ENCODE measurements at regions of chr4 and their contacts with region 1.

Region 1: DNA sequence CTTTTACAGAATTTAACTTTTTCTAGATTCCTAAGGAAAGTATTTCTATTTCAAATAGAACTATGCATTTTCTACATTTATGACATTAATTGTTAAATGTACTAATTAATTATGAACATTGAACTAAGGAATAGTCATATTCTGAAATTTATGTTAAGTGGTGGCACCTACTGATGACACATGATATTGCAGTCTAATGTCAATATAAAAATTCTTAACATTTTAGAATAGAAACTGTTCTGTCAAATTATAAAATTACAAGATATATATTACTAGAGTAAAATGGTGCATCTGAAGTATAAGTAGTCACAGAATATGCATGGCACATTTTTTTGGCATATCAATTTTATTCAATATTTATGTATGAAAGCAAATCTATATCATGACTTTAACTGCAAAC is 40.2 kb upstream of the NDNF start:
- DNase-seq: no peak
- H3K4me3 Mint-ChIP-seq: no peak overlapping the region
- H3K27ac Mint-ChIP-seq: no peak overlapping the region
- H3K4me1 Mint-ChIP-seq: peaks cover 11% of the 10 kb centered on the region
- H3K27me3 Mint-ChIP-seq: peaks cover 31% of the 10 kb centered on the region

Region 2: DNA sequence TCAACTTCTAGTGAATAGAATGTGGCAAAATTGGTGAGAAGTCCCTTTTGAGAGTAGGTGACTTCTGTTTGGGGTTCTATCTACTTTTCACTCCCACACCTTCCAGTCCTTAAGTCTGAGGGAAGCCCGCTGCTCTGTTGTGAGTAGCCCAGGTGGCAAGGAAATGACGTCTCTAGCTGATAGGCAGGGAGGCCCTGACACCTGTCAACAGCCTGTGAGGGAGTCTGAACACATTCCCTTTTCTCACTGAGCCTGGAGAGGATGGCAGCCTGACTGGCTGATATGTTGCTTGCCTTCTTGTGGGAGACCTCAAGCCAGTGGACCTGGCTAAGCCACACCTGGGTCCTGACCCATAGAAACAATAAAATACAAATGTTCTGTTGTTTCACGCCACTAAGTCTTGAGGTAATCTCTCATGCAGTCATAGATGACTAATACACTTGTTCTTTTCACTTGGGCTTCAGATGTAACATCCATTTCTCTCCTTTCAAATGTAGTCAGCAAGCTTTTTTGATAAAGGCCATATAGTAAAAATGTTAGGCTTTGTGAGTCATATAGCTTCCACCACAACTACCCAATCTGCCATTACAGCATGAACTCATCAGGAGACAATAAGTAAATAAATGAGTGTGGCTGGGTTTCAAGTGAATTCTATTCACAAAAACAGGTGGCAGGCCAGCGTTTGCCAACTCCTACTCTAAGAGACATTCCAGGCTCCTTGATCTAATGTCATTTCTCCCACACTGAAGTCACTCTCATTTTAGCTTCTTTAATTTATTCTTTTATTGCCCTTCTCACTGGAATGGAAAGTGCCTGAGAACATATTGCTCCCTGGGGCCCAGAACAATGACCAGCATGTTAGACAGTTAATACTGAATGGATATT is 780.8 kb before region 1 on chr4:
- intact Hi-C with region 1: loop called (anchors 5 kb)
- DNase-seq: no peak
- H3K4me3 Mint-ChIP-seq: no peak overlapping the region
- H3K27ac Mint-ChIP-seq: no peak overlapping the region
- H3K4me1 Mint-ChIP-seq: no peaks in the 10 kb centered on the region
- H3K27me3 Mint-ChIP-seq: peaks cover 2% of the 10 kb centered on the region

Region 3: GRCh38 chr4:121041307-121042090 is 71.0 kb before region 1 on chr4:
- intact Hi-C with region 1: loop called (anchors 1 kb)
- DNase-seq: peak; percentile 72
- H3K4me3 Mint-ChIP-seq: no peak overlapping the region
- H3K27ac Mint-ChIP-seq: peak overlapping the region; percentile 0
- H3K4me1 Mint-ChIP-seq: peaks cover 11% of the 10 kb centered on the region
- H3K27me3 Mint-ChIP-seq: peaks cover 49% of the 10 kb centered on the region

Region 4: DNA sequence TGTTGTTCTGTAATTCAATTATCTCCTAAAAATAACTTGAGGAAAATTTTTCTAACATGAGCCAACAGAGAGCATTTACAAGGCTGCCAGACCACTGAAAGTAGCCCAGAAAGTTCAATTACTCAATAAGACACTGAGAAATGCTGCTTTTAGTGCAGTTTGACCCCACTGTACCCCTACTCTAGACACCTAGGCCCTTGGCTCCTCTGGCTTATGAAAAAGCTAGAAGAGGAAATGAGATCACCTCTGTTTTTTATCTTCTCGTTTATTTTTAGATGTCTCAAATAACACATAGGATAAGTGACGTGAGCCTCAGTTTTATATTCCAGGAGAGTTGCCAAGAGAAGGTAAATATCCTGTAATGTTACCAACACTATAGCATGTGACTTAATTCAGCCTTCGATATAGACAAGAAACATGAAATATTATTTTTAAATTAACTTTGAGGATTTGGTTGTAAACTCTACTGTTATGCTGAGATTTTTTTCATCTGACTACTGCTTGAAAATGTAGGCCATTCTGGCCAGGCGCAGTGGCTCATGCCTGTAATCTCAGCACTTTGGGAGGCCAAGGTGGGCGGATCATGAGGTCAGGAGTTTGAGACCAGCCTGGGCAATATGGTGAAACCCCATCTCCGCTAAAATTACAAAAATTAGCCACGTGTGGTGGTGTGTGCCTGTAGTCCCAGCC is 27.1 kb after region 1 on chr4:
- intact Hi-C with region 1: loop called (anchors 1 kb)
- DNase-seq: no peak
- H3K4me3 Mint-ChIP-seq: peak overlapping the region; percentile 26
- H3K27ac Mint-ChIP-seq: peak overlapping the region; percentile 78
- H3K4me1 Mint-ChIP-seq: peaks cover 45% of the 10 kb centered on the region
- H3K27me3 Mint-ChIP-seq: peaks cover 1% of the 10 kb centered on the region

Region 5: DNA sequence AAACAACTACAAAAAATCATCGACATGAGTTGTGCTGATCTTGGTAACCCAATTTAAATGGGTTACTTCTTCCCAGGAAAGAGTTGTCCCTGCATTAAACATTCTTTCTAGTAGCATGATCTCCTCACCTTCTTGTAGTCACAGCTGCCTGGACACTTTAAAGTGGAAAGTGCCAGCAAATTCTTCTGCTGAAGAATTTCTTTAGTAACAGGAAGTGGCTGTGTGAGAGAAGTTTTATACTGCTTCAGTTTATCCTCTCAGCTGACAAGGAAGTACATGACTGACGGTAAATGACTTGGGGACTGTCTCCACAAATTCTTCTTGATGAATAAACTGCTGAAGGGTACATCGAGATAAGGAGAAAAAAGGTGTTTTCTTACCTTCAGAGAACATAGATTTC is 69.8 kb after region 1 on chr4:
- intact Hi-C with region 1: loop called (anchors 5 kb)
- DNase-seq: peak; percentile 84
- H3K4me3 Mint-ChIP-seq: peak overlapping the region; percentile 79
- H3K27ac Mint-ChIP-seq: peak overlapping the region; percentile 90
- H3K4me1 Mint-ChIP-seq: peaks cover 55% of the 10 kb centered on the region
- H3K27me3 Mint-ChIP-seq: no peaks in the 10 kb centered on the region

Region 6: DNA sequence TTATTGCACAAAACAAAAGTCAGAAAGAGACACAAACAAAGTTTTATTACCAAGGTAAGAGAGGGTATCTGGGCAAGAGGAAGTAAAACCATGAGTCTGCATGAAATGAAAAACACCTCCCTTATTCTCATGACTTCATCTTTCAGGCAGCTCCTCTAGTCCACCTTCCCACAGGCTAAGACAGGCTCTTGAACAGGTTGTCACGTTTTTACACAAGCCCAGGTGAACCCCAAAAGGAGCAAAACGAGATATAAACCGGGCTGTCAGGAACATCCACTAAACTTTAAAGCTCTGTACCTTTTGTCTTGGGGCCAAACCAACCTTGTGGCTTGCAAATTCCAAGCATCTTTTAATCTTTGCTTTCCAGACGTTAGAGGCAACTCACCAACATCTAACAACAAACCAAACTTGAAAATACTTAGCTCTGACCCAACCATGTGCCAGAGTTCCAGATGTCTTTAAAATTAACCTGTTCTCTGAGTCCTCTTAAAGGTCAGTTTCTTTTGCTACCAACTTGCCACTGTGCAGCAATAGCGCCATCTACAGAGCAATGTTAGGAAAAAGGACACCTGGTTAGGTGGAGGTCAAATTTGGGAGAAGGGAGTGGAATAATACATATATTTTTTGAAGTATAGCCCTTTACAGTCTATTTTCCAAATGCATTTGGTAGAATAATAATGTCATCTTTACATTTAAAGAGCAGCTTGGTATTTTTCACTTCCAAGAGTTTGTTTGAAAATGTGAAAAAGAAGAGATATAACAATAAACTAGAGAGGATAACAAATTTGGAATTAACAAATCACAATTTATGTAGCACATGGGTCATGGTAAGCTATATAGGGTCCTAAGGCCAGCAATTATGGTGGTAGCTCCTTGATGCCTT is 195.2 kb after region 1 on chr4:
- intact Hi-C with region 1: loop called (anchors 5 kb)
- DNase-seq: peak; percentile 84
- H3K4me3 Mint-ChIP-seq: no peak overlapping the region
- H3K27ac Mint-ChIP-seq: no peak overlapping the region
- H3K4me1 Mint-ChIP-seq: peaks cover 13% of the 10 kb centered on the region
- H3K27me3 Mint-ChIP-seq: peaks cover 17% of the 10 kb centered on the region